ENCODE measurements at regions of chr7 and their contacts with region 1.

Region 1: GRCh38 chr7:3194501-3195141 is 106.4 kb upstream of the SDK1 start:
- DNase-seq: peak; percentile 87 to 98
- H3K4me3 ChIP-seq: peak overlapping the region; percentile 3; the same call in 1 of the 2 replicates
- H3K27ac ChIP-seq: peak overlapping the region; percentile 83
- H3K4me1 ChIP-seq: peaks cover 35% of the 10 kb centered on the region
- H3K27me3 ChIP-seq: no peaks in the 10 kb centered on the region
- CTCF ChIP-seq: peak; percentile 69

Region 2: DNA sequence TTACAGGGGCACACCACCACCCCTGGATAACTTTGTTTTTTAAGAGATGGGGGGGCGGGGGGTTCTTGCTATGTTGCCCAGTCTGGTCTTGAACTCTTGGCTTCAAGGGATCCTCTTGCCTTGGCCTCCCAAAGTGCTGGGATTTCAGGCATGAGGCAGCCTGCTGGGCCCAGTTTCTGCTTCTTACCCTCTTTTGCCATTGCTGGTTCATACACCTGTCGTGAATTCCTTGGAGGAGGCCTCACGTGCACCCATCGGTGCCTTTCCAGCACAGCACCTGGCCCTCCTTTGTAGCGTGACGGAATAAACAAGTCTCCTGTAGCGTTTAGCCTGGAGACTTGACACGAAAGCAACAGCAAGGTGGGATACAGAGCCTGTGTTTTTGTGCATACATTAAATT is 226.4 kb before region 1 on chr7:
- CTCF ChIA-PET with region 1: no interaction called
- POLR2A ChIA-PET with region 1: no interaction called
- intact Hi-C with region 1: no loop called
- DNase-seq: peak in 1 of 2 experiments; percentile 19
- H3K4me3 ChIP-seq: no peak overlapping the region
- H3K27ac ChIP-seq: no peak overlapping the region
- H3K4me1 ChIP-seq: peaks cover 5% of the 10 kb centered on the region
- H3K27me3 ChIP-seq: no peaks in the 10 kb centered on the region
- CTCF ChIP-seq: no peak

Region 3: GRCh38 chr7:3028071-3028757 is 166.4 kb before region 1 on chr7:
- CTCF ChIA-PET with region 1: no interaction called
- POLR2A ChIA-PET with region 1: no interaction called
- intact Hi-C with region 1: loop called (anchors 1 kb)
- DNase-seq: peak; percentile 77 to 91
- H3K4me3 ChIP-seq: peak overlapping the region; percentile 39; the same call in 1 of the 2 replicates
- H3K27ac ChIP-seq: peak overlapping the region; percentile 85
- H3K4me1 ChIP-seq: peaks cover 25% of the 10 kb centered on the region
- H3K27me3 ChIP-seq: no peaks in the 10 kb centered on the region
- CTCF ChIP-seq: no peak

Region 4: GRCh38 chr7:3164380-3164792 is 30.2 kb before region 1 on chr7:
- CTCF ChIA-PET with region 1: no interaction called
- POLR2A ChIA-PET with region 1: no interaction called
- intact Hi-C with region 1: loop called (anchors 2 kb)
- DNase-seq: peak; percentile 62 to 91
- H3K4me3 ChIP-seq: no peak overlapping the region
- H3K27ac ChIP-seq: peak overlapping the region; percentile 56
- H3K4me1 ChIP-seq: peaks cover 22% of the 10 kb centered on the region
- H3K27me3 ChIP-seq: no peaks in the 10 kb centered on the region
- CTCF ChIP-seq: no peak

Region 5: GRCh38 chr7:3215761-3216519 is 21.3 kb after region 1 on chr7:
- CTCF ChIA-PET with region 1: no interaction called
- POLR2A ChIA-PET with region 1: interaction called, 8 read pairs
- intact Hi-C with region 1: loop called (anchors 1 kb)
- DNase-seq: peak; percentile 69 to 94
- H3K4me3 ChIP-seq: no peak overlapping the region; the same call in 1 of the 2 replicates
- H3K27ac ChIP-seq: peak overlapping the region; percentile 31; the same call in 1 of the 2 replicates
- H3K4me1 ChIP-seq: peaks cover 32% of the 10 kb centered on the region
- H3K27me3 ChIP-seq: no peaks in the 10 kb centered on the region
- CTCF ChIP-seq: no peak

Region 6: GRCh38 chr7:3244241-3244814 is 49.7 kb after region 1 on chr7:
- CTCF ChIA-PET with region 1: no interaction called
- POLR2A ChIA-PET with region 1: no interaction called
- intact Hi-C with region 1: loop called (anchors 1 kb)
- DNase-seq: peak; percentile 71 to 95
- H3K4me3 ChIP-seq: peak overlapping the region; percentile 36; the same call in 1 of the 2 replicates
- H3K27ac ChIP-seq: peak overlapping the region; percentile 64
- H3K4me1 ChIP-seq: peaks cover 39% of the 10 kb centered on the region
- H3K27me3 ChIP-seq: no peaks in the 10 kb centered on the region
- CTCF ChIP-seq: no peak